ENCODE measurements at regions of chr7 and their contacts with region 1.

Region 1: GRCh38 chr7:25389489-25390106 is 161.3 kb upstream of the NPVF start:
- DNase-seq: peak; percentile 42
- ATAC-seq: peak; percentile 73
- H3K4me3 ChIP-seq: no peak overlapping the region
- H3K27ac ChIP-seq: no peak overlapping the region
- H3K4me1 ChIP-seq: no peaks in the 10 kb centered on the region
- H3K27me3 ChIP-seq: peaks cover 6% of the 10 kb centered on the region
- CTCF ChIP-seq: peak; percentile 57
- POLR2A ChIP-seq: no peak
- RAD21 ChIP-seq: peak; percentile 52

Region 2: DNA sequence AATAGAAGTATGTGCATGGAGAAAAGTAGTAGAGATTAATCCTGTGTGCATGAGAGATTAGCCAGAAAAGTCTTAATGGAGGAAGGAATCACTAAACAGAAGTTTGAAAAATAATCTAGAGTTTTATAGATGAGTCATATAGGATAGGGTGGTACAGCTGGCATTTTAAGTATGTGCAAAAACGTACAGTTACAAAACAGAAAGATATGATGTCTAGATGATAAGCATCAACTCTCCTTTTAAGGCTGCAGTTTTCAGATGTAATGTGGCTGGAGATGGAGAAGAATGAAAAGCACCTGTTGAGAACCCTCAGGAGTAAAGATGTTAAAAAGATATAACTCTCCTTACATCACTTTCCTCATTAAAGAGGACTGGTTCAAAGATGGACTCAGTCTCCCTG is 1408.3 kb before region 1 on chr7:
- CTCF ChIA-PET with region 1: no interaction called
- POLR2A ChIA-PET with region 1: no interaction called
- dilution Hi-C with region 1: no loop called
- in situ Hi-C with region 1: no loop called
- intact Hi-C with region 1: no loop called
- DNase-seq: no peak
- ATAC-seq: no peak
- H3K4me3 ChIP-seq: no peak overlapping the region
- H3K27ac ChIP-seq: no peak overlapping the region
- H3K4me1 ChIP-seq: no peaks in the 10 kb centered on the region
- H3K27me3 ChIP-seq: no peaks in the 10 kb centered on the region
- CTCF ChIP-seq: no peak
- POLR2A ChIP-seq: no peak
- RAD21 ChIP-seq: no peak

Region 3: GRCh38 chr7:25171071-25171470 is 218.5 kb before region 1 on chr7:
- CTCF ChIA-PET with region 1: no interaction called
- POLR2A ChIA-PET with region 1: no interaction called
- dilution Hi-C with region 1: no loop called
- in situ Hi-C with region 1: no loop called
- intact Hi-C with region 1: no loop called
- DNase-seq: no peak
- ATAC-seq: no peak
- H3K4me3 ChIP-seq: no peak overlapping the region
- H3K27ac ChIP-seq: no peak overlapping the region
- H3K4me1 ChIP-seq: no peaks in the 10 kb centered on the region
- H3K27me3 ChIP-seq: no peaks in the 10 kb centered on the region
- CTCF ChIP-seq: no peak
- POLR2A ChIP-seq: no peak
- RAD21 ChIP-seq: no peak

Region 4: DNA sequence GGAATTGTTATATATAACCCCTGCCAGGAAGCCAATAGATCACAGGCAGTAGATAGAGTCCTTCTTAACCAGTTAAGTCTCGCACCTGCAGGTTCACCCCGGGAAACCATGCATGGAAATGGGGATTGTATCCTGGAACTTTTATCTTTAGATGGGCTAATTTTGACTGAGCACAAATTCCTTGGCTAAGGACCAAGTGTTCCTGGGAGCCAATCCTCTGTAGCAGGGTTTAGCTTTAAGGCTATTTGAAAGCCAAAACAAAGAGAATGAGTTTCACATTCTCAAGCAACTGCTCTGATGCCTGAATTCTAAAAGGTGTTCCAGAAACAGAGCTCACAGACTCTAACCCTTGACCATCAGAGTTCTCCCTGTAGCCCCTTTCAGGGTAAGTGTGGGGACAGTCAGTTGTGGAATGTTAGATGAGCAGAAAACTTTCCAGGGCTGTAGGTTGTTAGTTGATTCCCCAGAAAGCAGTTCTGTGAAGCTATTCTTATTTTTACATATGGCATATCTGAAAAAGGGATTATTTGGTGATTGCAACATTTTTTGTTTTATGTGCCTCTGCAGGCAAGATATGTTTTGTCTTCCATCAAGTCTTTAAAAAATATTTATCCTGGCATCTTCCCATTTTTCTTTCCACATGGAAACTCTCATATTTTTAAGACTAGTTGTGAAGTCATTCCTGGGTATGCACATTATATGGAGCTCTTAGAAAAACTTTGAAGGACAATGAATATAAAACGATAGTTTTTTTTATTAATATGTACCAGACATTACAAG is 145.2 kb before region 1 on chr7:
- CTCF ChIA-PET with region 1: no interaction called
- POLR2A ChIA-PET with region 1: no interaction called
- dilution Hi-C with region 1: no loop called
- in situ Hi-C with region 1: no loop called
- intact Hi-C with region 1: no loop called
- DNase-seq: no peak
- ATAC-seq: no peak
- H3K4me3 ChIP-seq: no peak overlapping the region
- H3K27ac ChIP-seq: no peak overlapping the region
- H3K4me1 ChIP-seq: no peaks in the 10 kb centered on the region
- H3K27me3 ChIP-seq: no peaks in the 10 kb centered on the region
- CTCF ChIP-seq: no peak
- POLR2A ChIP-seq: no peak
- RAD21 ChIP-seq: no peak

Region 5: DNA sequence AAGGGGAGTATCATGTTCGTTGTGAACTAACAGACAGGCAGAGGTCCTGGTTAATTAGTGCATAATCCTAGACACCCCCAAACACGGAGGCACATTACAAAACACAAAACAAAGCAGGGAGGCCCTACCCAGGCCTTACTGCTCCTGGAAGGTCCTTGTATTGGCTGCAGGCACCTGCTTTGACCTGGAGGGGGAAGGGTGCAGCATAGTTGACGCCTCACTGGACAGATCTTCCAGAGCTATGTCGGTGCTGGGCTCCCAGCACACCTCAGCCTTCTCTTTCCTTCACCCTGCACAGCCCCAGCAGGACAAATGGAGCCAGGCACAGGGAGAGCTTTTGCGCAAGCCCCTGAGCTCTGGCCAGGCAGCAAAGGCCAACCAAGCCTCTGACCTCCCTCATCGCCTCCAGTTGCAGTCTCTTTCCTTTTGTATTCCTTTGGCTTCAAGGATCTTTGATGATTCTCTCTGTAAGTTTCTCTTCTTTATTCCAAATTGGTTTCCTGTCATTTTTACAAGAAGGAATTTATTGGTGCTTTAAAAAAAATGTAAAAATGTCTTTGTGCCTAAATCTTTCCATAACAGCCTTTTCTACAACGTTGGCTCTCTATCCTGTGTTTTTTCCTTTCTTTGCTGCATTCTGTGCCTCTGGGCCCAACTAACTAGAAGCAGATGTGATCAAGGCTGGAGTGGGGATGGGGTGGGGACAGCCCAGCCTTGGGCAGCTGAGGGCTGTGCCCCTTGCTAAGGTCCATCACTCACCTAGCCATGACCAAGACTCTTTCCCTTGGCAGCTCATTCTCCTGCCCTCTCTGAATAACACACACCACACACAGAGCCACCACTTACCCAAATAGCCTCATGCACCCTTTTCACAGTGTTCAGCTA is 155.8 kb after region 1 on chr7:
- CTCF ChIA-PET with region 1: no interaction called
- POLR2A ChIA-PET with region 1: no interaction called
- dilution Hi-C with region 1: no loop called
- in situ Hi-C with region 1: no loop called
- intact Hi-C with region 1: no loop called
- DNase-seq: no peak
- ATAC-seq: no peak
- H3K4me3 ChIP-seq: no peak overlapping the region
- H3K27ac ChIP-seq: no peak overlapping the region
- H3K4me1 ChIP-seq: no peaks in the 10 kb centered on the region
- H3K27me3 ChIP-seq: no peaks in the 10 kb centered on the region
- CTCF ChIP-seq: no peak
- POLR2A ChIP-seq: no peak
- RAD21 ChIP-seq: no peak

Region 6: DNA sequence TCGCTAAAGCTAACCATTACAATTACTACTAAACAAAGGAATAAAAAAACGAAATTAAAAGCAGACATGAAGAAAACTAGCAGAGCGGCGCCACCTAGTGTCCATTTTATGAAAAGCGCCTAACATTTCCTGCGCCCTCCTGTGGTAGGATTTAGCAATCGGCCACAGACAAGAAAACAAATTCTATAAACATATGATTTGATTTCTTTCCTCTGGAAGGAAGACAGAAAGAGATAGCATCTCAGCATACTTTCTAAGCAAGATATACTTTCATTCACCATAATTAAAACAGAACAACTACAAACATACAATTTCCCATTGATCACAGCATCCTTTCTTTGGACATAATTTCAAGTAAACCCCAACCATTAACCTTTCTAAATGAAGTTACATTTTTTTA is 176.4 kb after region 1 on chr7:
- CTCF ChIA-PET with region 1: interaction called, 3 read pairs
- POLR2A ChIA-PET with region 1: no interaction called
- dilution Hi-C with region 1: no loop called
- in situ Hi-C with region 1: no loop called
- intact Hi-C with region 1: loop called (anchors 1 kb)
- DNase-seq: peak; percentile 69
- ATAC-seq: peak; percentile 65
- H3K4me3 ChIP-seq: no peak overlapping the region
- H3K27ac ChIP-seq: no peak overlapping the region
- H3K4me1 ChIP-seq: no peaks in the 10 kb centered on the region
- H3K27me3 ChIP-seq: no peaks in the 10 kb centered on the region; the same call in 1 of the 2 replicates
- CTCF ChIP-seq: peak; percentile 100; the same call in 1 of the 2 replicates
- POLR2A ChIP-seq: no peak
- RAD21 ChIP-seq: peak; percentile 71